Activated T-helper 1 cell treated with anti-CD3 and anti-CD28 coated beads, Interleukin-12 subunit alpha, Interleukin-12 subunit beta, Interleukin-2, Interleukin-4 antibody, amounts not matched to agents 30 ng/mL and 10 ng/mL and 1 ng/mL, durations not matched to agents 14 hours and 24 hours and 36 hours (primary cell): ENCODE measurements at regions of chr17 and their contacts with region 1.

Region 1: GRCh38 chr17:49191917-49192741 is 18.2 kb downstream of the GNGT2 start:
- DNase-seq: peak; percentile 88
- H3K4me3 Mint-ChIP-seq: peak overlapping the region; percentile 89
- H3K27ac Mint-ChIP-seq: peak overlapping the region; percentile 98
- H3K4me1 Mint-ChIP-seq: peaks cover 49% of the 10 kb centered on the region
- H3K27me3 Mint-ChIP-seq: peaks cover 8% of the 10 kb centered on the region

Region 2: GRCh38 chr17:48830840-48831548 is 361.1 kb before region 1 on chr17 and contains the start of gene CALCOCO2:
- intact Hi-C with region 1: loop called (anchors 5 kb)
- DNase-seq: peak; percentile 85
- H3K4me3 Mint-ChIP-seq: peak within 1 kb of the TSS; percentile 93
- H3K27ac Mint-ChIP-seq: peak within 1 kb of the TSS; percentile 97
- H3K4me1 Mint-ChIP-seq: peaks cover 50% of the 10 kb centered on the region
- H3K27me3 Mint-ChIP-seq: peaks cover 12% of the 10 kb centered on the region
- total RNA-seq, gene CALCOCO2: 50.3 and 57.9 TPM in 2 replicates

Region 3: DNA sequence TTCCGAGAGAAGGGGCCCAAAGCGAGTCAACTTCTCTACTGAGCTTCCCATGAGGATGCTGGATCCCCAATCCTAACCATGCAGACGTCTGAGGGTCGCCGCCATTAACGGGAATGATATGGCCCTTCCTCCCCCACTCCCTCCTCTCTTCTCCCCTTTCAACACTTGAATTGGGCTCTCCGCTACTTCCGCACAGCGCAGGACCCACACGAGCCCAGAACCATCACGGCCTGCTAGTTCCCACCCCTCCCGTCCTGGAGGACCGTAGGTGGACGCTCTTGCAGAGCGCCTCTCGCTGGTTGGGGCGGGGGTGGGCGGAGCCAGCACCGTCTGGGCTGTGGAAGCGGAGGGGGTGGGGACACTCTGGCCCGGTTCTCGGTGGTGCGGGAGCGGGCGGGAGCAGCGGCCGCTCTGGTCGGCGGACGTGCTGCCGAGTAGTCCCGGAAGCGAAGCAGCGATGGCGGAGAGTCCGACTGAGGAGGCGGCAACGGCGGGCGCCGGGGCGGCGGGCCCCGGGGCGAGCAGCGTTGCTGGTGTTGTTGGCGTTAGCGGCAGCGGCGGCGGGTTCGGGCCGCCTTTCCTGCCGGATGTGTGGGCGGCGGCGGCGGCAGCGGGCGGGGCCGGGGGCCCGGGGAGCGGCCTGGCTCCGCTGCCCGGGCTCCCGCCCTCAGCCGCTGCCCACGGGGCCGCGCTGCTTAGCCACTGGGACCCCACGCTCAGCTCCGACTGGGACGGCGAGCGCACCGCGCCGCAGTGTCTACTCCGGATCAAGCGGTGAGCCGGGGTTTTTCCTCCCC is 283.9 kb before region 1 on chr17 and contains the start of gene UBE2Z:
- intact Hi-C with region 1: loop called (anchors 1 kb)
- DNase-seq: peak; percentile 81
- H3K4me3 Mint-ChIP-seq: peak within 1 kb of the TSS; percentile 93
- H3K27ac Mint-ChIP-seq: peak within 1 kb of the TSS; percentile 97
- H3K4me1 Mint-ChIP-seq: peaks cover 43% of the 10 kb centered on the region
- H3K27me3 Mint-ChIP-seq: no peaks in the 10 kb centered on the region
- total RNA-seq, gene UBE2Z: 88.8 and 91.5 TPM in 2 replicates

Region 4: DNA sequence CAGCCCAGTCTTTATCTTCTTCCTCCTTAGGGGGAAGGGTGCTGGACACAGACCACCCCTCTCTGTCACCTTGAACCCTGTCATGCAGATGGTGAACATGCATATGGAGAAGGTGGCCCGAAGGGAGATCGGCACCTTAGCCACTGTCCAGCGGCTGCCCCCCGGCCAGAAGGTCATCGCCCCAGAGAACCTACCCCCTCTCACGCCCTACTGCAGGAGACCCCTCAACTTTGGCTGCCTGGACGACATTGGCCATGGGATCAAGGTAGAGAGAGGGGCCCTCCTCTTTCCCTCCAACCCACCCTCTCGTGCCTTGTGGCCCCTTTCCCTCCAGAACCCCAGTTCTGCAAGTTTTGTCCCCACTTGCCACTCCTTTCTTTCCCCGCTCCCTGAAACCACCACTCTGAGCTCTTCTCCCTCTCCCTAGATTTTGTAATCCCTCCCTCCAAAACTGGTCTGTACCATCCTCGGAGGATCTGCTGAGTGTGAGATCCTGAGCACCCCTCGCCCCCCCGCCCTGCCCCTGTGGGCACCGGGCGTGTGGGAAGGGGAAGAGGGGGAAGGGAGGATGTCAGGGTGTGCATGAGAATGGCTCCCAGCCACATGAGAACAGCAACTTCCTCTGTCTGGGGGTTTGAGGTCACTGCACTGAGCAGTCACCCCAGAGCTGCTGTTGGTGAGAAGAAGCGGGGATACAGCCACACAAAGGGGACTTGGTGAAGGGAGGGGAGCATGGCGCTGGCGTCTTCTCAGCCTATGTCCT is 25.7 kb after region 1 on chr17:
- intact Hi-C with region 1: loop called (anchors 1 kb)
- DNase-seq: peak; percentile 65
- H3K4me3 Mint-ChIP-seq: peak overlapping the region; percentile 82
- H3K27ac Mint-ChIP-seq: peak overlapping the region; percentile 82
- H3K4me1 Mint-ChIP-seq: peaks cover 72% of the 10 kb centered on the region
- H3K27me3 Mint-ChIP-seq: no peaks in the 10 kb centered on the region

Region 5: DNA sequence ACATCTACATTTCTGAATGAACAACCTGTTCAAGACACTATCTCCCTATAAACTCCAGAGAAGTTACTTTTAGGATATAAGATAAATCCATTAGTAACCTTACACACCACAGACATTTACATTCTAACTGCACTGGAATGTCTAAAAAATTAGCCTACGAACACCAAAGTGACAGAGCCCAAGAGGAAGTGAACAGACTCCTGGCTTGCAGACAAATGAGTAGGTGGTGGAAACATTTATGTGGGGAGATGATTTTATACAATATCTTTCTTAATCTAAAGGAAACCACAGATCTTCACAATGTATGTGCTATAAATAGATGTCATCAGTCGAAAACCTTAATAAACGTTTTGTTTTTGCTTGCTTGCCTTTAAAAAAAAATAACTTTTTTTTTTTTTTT is 151.1 kb after region 1 on chr17:
- intact Hi-C with region 1: loop called (anchors 5 kb)
- DNase-seq: no peak
- H3K4me3 Mint-ChIP-seq: peak overlapping the region; percentile 72
- H3K27ac Mint-ChIP-seq: peak overlapping the region; percentile 83
- H3K4me1 Mint-ChIP-seq: peaks cover 62% of the 10 kb centered on the region
- H3K27me3 Mint-ChIP-seq: peaks cover 2% of the 10 kb centered on the region

Region 6: GRCh38 chr17:49414622-49415350 is 222.7 kb after region 1 on chr17 and contains the start of gene PHB1:
- intact Hi-C with region 1: loop called (anchors 1 kb)
- DNase-seq: peak; percentile 93
- H3K4me3 Mint-ChIP-seq: peak within 1 kb of the TSS; percentile 98
- H3K27ac Mint-ChIP-seq: peak within 1 kb of the TSS; percentile 95
- H3K4me1 Mint-ChIP-seq: peaks cover 9% of the 10 kb centered on the region
- H3K27me3 Mint-ChIP-seq: peaks cover 3% of the 10 kb centered on the region
- total RNA-seq, gene PHB1: 395 and 401 TPM in 2 replicates